ENCODE measurements at regions of chr2 and their contacts with region 1.

Region 1: DNA sequence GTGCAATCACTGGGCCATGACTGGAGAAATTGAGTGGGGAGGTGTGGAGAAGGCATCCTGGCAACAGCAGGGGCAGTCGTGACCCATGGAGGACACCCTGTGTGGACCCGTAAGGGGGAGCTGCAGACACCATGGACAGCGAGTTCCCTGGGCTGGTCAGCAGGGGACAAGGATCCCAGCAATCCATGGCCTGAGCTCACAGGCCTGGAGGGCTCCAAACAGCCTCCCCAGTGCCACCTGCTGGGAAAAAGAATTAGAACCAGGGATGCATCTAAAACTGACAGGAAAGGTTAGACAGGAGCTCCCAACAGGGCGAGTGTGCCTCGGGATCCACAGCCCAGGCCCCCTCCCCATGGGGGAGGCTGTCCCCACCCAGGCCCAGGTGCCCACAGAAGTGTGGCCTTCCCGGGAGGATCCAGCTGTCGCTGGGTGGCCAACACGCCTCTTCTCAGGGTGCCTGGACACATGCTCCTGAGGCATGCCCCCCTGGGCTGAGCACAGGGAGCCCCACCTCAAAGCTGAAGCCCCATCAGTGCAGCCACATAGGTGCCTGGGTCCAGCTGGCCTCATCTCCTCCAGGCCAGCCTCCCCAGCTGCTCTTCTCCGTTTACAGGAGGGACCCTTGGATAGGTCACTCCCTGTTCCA is 20.5 kb upstream of the KIF1A start:
- DNase-seq: peak; percentile 73
- ATAC-seq: peak; percentile 96
- H3K4me3 ChIP-seq: no peak overlapping the region
- H3K27ac ChIP-seq: no peak overlapping the region
- H3K4me1 ChIP-seq: no peaks in the 10 kb centered on the region; the same call in 1 of the 2 replicates
- H3K27me3 ChIP-seq: peaks cover 29% of the 10 kb centered on the region
- CTCF ChIP-seq: peak; percentile 69

Region 2: DNA sequence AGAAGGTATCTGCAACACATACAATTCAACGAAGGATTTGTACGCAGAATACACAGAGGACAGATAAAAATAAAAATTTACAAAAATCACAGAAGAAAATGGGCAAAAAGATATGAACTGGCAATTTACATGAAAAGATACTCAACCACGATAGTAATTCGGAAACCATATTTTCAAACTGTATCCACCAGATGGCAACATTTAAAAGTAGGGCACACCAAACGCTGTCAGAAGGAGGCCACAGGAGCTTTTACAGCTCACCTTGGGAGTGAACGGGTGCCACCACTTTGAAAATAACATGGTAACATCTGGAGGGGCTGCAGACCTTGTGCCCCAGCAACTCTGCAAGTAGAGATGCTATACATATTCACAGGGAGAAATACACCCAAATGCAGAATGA is 30.4 kb before region 1 on chr2:
- CTCF ChIA-PET with region 1: interaction called, 13 read pairs
- POLR2A ChIA-PET with region 1: no interaction called
- intact Hi-C with region 1: loop called (anchors 1 kb)
- DNase-seq: peak; percentile 44
- ATAC-seq: no peak
- H3K4me3 ChIP-seq: no peak overlapping the region
- H3K27ac ChIP-seq: no peak overlapping the region
- H3K4me1 ChIP-seq: no peaks in the 10 kb centered on the region
- H3K27me3 ChIP-seq: peaks cover 16% of the 10 kb centered on the region; the same call in 1 of the 2 replicates
- CTCF ChIP-seq: peak; percentile 53